Activated CD4-positive, alpha-beta T cell treated with anti-CD3 and anti-CD28 coated beads, Interleukin-2, amount 10 ng/mL, durations not matched to agents 7 days and 5 days (primary cell): ENCODE measurements at regions of chr17 and their contacts with region 1.

Region 1: DNA sequence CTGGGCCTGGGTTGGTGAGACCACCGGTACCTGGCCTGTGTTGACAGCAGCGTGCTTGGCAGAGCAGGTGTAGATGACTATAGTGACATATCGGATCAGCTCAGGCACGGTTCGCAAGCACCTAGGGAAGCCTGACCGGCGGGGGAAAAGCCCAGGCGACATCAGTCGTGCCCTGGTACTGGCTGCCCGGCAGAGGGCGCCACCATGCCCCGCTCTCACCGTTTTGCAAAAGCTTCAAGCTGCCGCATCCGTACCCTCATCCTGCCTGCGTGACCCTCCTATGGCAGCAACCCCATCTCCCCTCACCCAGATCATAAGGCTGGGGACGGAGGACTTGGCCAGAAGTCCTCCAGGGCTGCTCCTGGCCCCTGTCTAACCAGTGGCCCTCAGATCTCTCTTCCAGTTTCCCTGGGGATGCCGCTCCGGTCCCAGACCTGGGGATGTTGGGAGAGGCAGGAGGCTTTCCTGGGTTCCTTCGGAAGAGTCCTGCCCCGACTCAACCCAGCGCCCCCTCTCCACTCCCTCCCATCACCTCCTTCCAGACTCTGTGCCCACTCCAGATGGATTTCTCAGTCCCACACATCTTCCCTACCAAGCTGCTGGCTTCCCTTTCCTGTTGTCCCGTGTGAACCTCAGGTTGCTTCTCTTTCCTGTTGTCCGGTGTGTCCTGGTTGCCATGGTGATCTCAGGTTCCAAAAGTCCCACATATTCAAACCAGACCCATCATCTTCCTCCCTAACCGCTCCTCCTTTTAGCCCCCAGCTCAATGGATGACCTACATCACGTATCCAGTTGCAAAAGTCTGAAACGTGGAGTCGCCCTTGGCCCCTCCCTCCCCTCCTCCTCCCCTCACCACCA is 13.7 kb downstream of the ALOX12B start:
- DNase-seq: peak; percentile 85
- H3K4me3 Mint-ChIP-seq: peak overlapping the region; percentile 60
- H3K27ac Mint-ChIP-seq: no peak overlapping the region
- H3K4me1 Mint-ChIP-seq: peaks cover 21% of the 10 kb centered on the region
- H3K27me3 Mint-ChIP-seq: peaks cover 57% of the 10 kb centered on the region

Region 2: DNA sequence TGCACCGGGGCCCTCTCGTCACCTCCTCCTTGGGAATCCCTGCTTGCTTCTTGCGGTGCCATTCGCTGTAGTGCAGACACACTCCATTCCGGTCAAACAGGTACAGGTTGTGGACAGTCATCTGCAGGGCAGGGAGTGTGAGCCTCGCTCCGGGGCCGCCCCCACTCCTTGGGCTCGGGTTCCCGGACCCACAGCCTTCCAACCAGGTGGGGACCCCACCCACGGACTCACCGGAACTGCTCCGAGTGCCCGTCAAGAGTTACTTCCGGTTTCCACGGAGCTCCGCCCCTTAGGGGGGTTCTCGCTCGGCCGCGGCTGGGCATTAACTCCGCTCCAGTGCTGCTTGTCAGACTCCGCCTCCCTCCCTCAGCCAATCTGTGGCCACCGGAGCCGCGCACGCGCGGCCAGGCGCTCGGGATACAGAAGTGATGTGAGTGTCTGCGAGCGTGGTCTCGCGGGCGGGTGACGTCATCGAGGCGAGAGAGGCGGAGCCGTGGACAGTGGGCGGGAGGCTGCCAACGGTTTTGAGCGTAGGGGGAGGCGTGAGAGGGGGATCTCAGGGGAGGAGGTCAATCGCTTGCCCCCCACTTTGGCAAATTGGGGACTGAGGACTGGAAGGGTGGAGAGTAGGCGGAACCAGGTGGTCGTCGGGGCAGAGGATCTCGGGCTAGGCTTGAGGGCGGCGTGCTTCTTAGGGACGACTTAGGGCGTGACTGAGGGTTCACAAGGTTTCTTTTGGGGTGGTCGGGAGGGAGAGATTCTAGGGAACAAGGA is 142.0 kb before region 1 on chr17 and contains the starts of genes CNTROB and TRAPPC1:
- CTCF ChIA-PET with region 1: no interaction called
- POLR2A ChIA-PET with region 1: no interaction called
- DNase-seq: peak; percentile 100
- H3K4me3 Mint-ChIP-seq: peak within 1 kb of the TSS; percentile 94
- H3K27ac Mint-ChIP-seq: peak within 1 kb of the TSS; percentile 96
- H3K4me1 Mint-ChIP-seq: peaks cover 55% of the 10 kb centered on the region
- H3K27me3 Mint-ChIP-seq: no peaks in the 10 kb centered on the region
- total RNA-seq, gene CNTROB: 74.3 to 77.4 TPM
- total RNA-seq, gene TRAPPC1: 235 to 251 TPM

Region 3: DNA sequence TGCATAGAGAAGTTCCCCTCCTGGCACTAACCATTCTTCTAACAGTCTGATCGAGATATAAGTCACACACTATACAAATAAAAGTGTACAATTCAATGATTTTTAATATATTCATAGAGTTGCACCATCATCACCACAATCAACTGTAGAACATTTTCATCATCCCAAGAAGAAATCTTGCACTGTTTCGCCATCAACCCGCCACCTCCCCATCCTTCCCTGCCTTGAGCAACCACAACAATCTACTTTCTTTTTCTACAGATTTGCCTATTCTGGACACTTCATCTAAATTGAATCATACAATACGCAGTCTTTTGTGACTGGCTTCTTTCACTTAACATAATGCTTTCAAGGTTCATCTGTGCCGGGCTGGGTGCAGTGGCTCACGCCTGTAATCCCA is 104.4 kb before region 1 on chr17:
- CTCF ChIA-PET with region 1: no interaction called
- POLR2A ChIA-PET with region 1: no interaction called
- DNase-seq: no peak
- H3K4me3 Mint-ChIP-seq: no peak overlapping the region
- H3K27ac Mint-ChIP-seq: no peak overlapping the region
- H3K4me1 Mint-ChIP-seq: no peaks in the 10 kb centered on the region
- H3K27me3 Mint-ChIP-seq: peaks cover 1% of the 10 kb centered on the region

Region 4: GRCh38 chr17:8057691-8058114 is 16.2 kb before region 1 on chr17:
- CTCF ChIA-PET with region 1: interaction called, 28 read pairs
- POLR2A ChIA-PET with region 1: no interaction called
- DNase-seq: peak; percentile 66
- H3K4me3 Mint-ChIP-seq: no peak overlapping the region
- H3K27ac Mint-ChIP-seq: no peak overlapping the region
- H3K4me1 Mint-ChIP-seq: peaks cover 25% of the 10 kb centered on the region
- H3K27me3 Mint-ChIP-seq: peaks cover 61% of the 10 kb centered on the region

Region 5: DNA sequence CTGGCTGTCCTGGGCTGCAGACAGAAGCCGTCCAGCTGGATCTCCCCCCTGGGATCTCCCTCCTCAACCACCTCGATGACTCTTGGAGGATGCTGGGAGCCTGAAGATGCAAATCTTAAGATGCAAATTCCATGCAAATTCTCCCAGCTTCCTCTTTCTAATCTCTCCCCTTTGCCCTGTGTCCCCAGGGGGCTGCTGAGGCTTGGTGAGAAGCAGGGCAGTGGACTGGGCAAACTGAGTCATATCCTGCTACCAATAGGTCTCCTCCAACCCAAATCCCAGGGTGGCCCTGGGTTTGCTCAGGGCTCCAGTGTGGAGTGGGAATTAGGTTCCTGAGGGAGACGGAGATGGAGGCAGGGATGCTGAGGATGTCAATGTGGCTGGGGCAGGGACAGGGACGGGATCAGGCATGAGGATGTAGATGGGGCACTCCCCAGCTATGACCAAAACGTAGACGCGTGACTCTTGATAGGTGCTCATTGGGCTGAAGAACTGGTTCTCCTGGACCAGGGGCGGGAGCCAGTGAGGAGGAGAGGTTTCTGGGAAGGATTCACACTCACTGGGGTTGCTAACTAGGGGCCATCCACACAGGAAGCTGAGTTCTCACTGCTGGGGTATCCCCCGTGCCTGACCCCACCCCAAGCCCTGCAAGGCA is 17.3 kb after region 1 on chr17:
- CTCF ChIA-PET with region 1: interaction called, 32 read pairs
- POLR2A ChIA-PET with region 1: no interaction called
- DNase-seq: no peak
- H3K4me3 Mint-ChIP-seq: no peak overlapping the region
- H3K27ac Mint-ChIP-seq: no peak overlapping the region
- H3K4me1 Mint-ChIP-seq: peaks cover 14% of the 10 kb centered on the region
- H3K27me3 Mint-ChIP-seq: peaks cover 30% of the 10 kb centered on the region

Region 6: DNA sequence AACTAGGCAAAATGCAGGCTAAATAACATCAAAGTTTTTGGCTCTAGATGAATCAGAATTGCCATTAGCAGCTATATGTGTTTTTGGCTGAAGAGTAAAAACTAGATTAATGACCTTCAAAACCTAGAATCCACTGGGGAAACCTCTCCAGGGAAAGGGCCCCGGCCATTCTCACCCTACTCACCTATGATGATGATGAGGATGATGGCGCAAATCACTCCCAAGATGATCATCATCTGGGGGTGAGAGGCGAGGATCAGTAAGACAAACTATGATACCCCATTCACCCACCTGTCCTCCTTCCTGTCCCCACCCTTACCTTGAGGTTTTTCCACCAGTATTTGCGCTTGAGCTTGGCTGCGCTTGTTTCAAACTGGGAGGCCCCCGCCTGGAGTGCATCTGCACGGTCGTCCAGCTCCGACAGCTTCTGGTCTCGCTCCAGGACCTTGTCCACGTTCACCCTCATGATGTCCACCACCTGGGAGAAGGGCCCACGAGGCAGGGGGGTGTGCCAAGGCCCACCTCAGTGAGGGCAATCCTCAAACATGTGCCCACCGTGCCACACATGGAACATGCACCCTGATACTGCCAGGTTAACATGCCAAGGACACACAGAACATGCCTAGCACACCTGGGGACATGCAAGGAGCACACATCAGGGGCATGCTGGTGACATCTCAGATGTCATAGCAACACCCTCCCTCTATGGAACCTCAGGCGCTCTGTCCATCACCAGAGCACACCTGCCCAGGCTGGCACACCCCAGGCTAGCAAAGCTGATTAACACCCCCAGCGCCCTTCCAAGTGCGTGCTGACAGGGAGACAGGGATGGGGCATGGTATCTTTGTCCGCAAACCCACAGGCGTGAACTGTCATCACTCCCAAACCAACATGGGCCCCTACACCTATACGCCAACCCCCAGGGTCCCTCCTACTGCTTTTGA is 87.7 kb after region 1 on chr17:
- CTCF ChIA-PET with region 1: no interaction called
- POLR2A ChIA-PET with region 1: no interaction called
- DNase-seq: no peak
- H3K4me3 Mint-ChIP-seq: peak overlapping the region; percentile 85
- H3K27ac Mint-ChIP-seq: peak overlapping the region; percentile 93
- H3K4me1 Mint-ChIP-seq: peaks cover 62% of the 10 kb centered on the region
- H3K27me3 Mint-ChIP-seq: no peaks in the 10 kb centered on the region

Region 7: GRCh38 chr17:8173056-8173870 is 99.4 kb after region 1 on chr17:
- CTCF ChIA-PET with region 1: no interaction called
- POLR2A ChIA-PET with region 1: no interaction called
- DNase-seq: peak; percentile 88
- H3K4me3 Mint-ChIP-seq: peak overlapping the region; percentile 95
- H3K27ac Mint-ChIP-seq: peak overlapping the region; percentile 100
- H3K4me1 Mint-ChIP-seq: peaks cover 58% of the 10 kb centered on the region
- H3K27me3 Mint-ChIP-seq: no peaks in the 10 kb centered on the region